ENCODE measurements at regions of chr1 and their contacts with region 1.

Region 1: GRCh38 chr1:45569962-45570581 is 13.8 kb upstream of the NASP start:
- DNase-seq: peak; percentile 74 to 79 (median 77)
- ATAC-seq: peak; percentile 92
- H3K4me3 ChIP-seq: no peak overlapping the region
- H3K27ac ChIP-seq: no peak overlapping the region
- H3K4me1 ChIP-seq: no peaks in the 10 kb centered on the region
- H3K27me3 ChIP-seq: no peaks in the 10 kb centered on the region
- CTCF ChIP-seq: peak; percentile 91 to 98 (median 96)
- POLR2A ChIP-seq: no peak

Region 2: GRCh38 chr1:45339789-45340570 is 230.1 kb before region 1 on chr1 and contains the starts of genes MUTYH and TOE1:
- intact Hi-C with region 1: loop called (anchors 10 kb)
- DNase-seq: peak; percentile 90 to 93 (median 92)
- ATAC-seq: peak; percentile 92
- H3K4me3 ChIP-seq: peak within 1 kb of the TSS; percentile 60 to 93
- H3K27ac ChIP-seq: peak within 1 kb of the TSS; percentile 83 to 99 (median 96)
- H3K4me1 ChIP-seq: peaks cover 27% of the 10 kb centered on the region
- H3K27me3 ChIP-seq: no peaks in the 10 kb centered on the region
- CTCF ChIP-seq: peak in 2 of 7 experiments; percentile 11 to 13
- POLR2A ChIP-seq: peak; percentile 81 to 89 (median 83)
- total RNA-seq, gene MUTYH: 19.7 to 21.8 TPM
- total RNA-seq, gene TOE1: 2.0 to 2.3 TPM

Region 3: GRCh38 chr1:45512641-45513054 is 57.4 kb before region 1 on chr1:
- intact Hi-C with region 1: loop called (anchors 5 kb)
- DNase-seq: peak; percentile 67 to 81 (median 74)
- ATAC-seq: peak; percentile 73
- H3K4me3 ChIP-seq: no peak overlapping the region
- H3K27ac ChIP-seq: no peak overlapping the region
- H3K4me1 ChIP-seq: no peaks in the 10 kb centered on the region
- H3K27me3 ChIP-seq: no peaks in the 10 kb centered on the region
- CTCF ChIP-seq: peak; percentile 38 to 71 (median 65)
- POLR2A ChIP-seq: no peak

Measured in body of pancreas (tissue), 4 donors.